T-cell (primary cell): ENCODE measurements at regions of chr15 and their contacts with region 1.

Region 1: DNA sequence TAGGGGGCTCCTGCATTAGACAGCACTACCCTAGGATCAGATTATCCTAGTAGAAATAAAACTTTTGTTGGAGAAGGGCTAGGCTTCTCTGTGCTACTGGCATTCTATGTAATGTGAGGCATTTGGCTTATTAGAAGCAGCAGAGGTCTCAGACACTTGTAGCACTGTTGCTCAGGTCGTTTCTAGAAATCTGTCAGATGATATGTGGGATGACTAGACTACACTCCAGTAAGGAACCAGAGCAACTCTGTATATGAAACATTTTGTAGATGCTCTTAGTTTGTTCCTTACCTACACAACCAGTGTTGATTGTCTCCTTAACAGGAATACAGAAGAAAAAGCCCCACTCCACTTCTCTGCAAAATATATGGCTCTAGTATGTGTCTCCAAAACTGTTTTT is 21.9 kb upstream of the FBXL22 start:
- DNase-seq: no peak
- ATAC-seq: no peak
- H3K4me3 ChIP-seq: no peak overlapping the region
- H3K4me3 Mint-ChIP-seq: no peak overlapping the region
- H3K27ac ChIP-seq: no peak overlapping the region
- H3K27ac Mint-ChIP-seq: peak overlapping the region in 1 of 2 donors; percentile 29
- H3K4me1 ChIP-seq: no peaks in the 10 kb centered on the region
- H3K4me1 Mint-ChIP-seq: peaks cover 7 to 14% (median 14%) of the 10 kb centered on the region in 3 donors
- H3K27me3 ChIP-seq: no peaks in the 10 kb centered on the region
- H3K27me3 Mint-ChIP-seq: no peaks in the 10 kb centered on the region

Region 2: DNA sequence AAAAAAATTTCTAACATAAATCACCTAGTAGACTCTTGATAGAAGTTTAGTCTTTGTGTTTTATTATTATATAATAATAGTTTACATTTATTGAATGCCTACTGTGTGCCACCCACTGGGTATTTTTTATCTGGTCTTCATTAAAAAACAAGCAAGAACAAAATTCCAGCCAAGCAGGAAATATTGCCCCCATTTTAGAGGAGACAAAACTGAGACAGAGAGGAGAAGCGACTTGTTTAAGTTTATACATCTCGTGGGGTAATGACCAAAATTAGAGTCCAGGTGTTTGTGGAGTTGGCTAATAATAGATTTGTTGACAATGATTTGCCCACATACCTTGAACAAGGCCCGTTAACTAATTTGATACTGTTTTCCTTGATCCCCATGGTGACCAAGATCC is 11.2 kb before region 1 on chr15:
- CTCF ChIA-PET with region 1: interaction called, 3 read pairs
- POLR2A ChIA-PET with region 1: interaction called, 6 to 11 read pairs
- DNase-seq: no peak
- ATAC-seq: no peak
- H3K4me3 ChIP-seq: no peak overlapping the region
- H3K4me3 Mint-ChIP-seq: no peak overlapping the region
- H3K27ac ChIP-seq: no peak overlapping the region
- H3K27ac Mint-ChIP-seq: no peak overlapping the region
- H3K4me1 ChIP-seq: peaks cover 0 to 2% of the 10 kb centered on the region in 2 experiments
- H3K4me1 Mint-ChIP-seq: peaks cover 15 to 22% (median 17%) of the 10 kb centered on the region in 3 donors
- H3K27me3 ChIP-seq: no peaks in the 10 kb centered on the region
- H3K27me3 Mint-ChIP-seq: no peaks in the 10 kb centered on the region

Region 3: DNA sequence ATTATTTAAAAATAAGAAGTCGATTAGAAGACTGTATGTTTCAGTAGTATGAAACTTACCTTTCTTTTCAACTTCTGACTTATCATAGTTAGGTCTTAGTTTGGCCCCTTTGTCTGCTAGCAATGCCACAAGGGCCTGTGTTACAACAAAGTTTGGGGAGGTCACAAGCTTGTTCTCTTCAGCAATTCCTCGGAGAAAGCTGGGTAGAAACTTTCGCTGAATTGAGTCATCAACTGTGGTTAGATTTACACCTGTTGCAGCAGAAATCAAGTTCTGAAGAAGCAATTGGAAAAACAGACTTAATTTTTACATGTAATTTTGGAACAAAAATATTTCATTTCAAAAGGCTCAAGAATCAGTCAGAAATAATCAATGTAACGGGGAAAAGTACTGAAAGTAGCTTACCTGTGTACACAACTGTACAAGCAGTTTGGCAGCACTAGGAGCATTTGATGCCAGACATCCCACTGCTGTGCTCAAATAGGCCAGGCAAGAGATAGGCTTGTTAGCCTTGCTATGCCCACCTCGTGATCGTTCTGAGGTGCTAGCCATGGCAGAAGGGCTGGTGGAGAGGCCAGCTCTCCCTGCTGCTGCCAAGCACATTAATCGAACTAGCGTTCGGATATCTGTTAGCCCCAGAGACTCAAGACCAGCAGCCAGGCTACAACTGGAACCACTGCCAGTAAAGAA is 80.5 kb after region 1 on chr15:
- CTCF ChIA-PET with region 1: no interaction called
- POLR2A ChIA-PET with region 1: no interaction called
- DNase-seq: no peak
- ATAC-seq: no peak
- H3K4me3 ChIP-seq: no peak overlapping the region
- H3K4me3 Mint-ChIP-seq: no peak overlapping the region
- H3K27ac ChIP-seq: no peak overlapping the region
- H3K27ac Mint-ChIP-seq: no peak overlapping the region
- H3K4me1 ChIP-seq: no peaks in the 10 kb centered on the region
- H3K4me1 Mint-ChIP-seq: peaks cover 0 to 2% (median 0%) of the 10 kb centered on the region in 3 donors
- H3K27me3 ChIP-seq: no peaks in the 10 kb centered on the region
- H3K27me3 Mint-ChIP-seq: no peaks in the 10 kb centered on the region